Ascending aorta (tissue), 2 donors: ENCODE measurements at regions of chr22 and their contacts with region 1.

Region 1: DNA sequence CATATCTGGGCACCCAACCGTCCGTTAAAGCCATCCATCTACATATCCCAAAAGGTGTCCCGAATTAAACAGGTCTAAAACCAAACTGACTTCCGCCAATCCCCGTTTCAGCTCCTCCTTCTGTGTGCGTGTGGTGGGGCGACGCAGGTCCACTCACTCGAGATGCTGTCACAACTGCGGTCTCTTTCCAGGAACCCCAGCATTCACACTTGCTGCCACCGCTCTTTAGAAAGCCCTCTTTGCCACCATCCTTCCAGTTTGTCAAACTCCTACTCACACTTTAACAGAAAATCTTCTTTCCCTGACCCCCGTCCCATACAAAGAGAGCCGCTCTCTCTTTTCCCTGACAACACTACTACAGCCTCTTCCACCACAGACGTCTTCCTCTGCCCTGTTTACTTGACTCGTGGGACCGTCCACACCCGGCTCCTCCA is 467 bp downstream of the ESS2 start:
- DNase-seq: no peak
- H3K4me3 ChIP-seq: peak overlapping the region; percentile 78 to 80
- H3K27ac ChIP-seq: peak overlapping the region; percentile 63 to 72
- H3K4me1 ChIP-seq: peaks cover 0 to 9% of the 10 kb centered on the region in 2 donors
- H3K27me3 ChIP-seq: peaks cover 5% of the 10 kb centered on the region
- CTCF ChIP-seq: no peak

Region 2: GRCh38 chr22:19122143-19122751 is 21.7 kb before region 1 on chr22 and contains the start of gene DGCR2:
- intact Hi-C with region 1: loop called (anchors 1 kb)
- DNase-seq: peak; percentile 87 to 98
- H3K4me3 ChIP-seq: peak within 1 kb of the TSS; percentile 86 to 97
- H3K27ac ChIP-seq: peak within 1 kb of the TSS; percentile 83 to 87
- H3K4me1 ChIP-seq: peaks cover 16 to 27% of the 10 kb centered on the region in 2 donors
- H3K27me3 ChIP-seq: no peaks in the 10 kb centered on the region
- CTCF ChIP-seq: no peak
- total RNA-seq, gene DGCR2: 34.7 TPM

Region 3: GRCh38 chr22:19167106-19167869 is 23.3 kb after region 1 on chr22:
- intact Hi-C with region 1: no loop called
- DNase-seq: no peak
- H3K4me3 ChIP-seq: no peak overlapping the region
- H3K27ac ChIP-seq: no peak overlapping the region
- H3K4me1 ChIP-seq: peaks cover 9 to 19% of the 10 kb centered on the region in 2 donors
- H3K27me3 ChIP-seq: no peaks in the 10 kb centered on the region
- CTCF ChIP-seq: no peak

Region 4: GRCh38 chr22:19479357-19480172 is 335.6 kb after region 1 on chr22 and contains the start of gene CDC45:
- intact Hi-C with region 1: loop called (anchors 1 kb)
- DNase-seq: peak; percentile 90 to 98
- H3K4me3 ChIP-seq: peak within 1 kb of the TSS; percentile 84 to 85
- H3K27ac ChIP-seq: peak within 1 kb of the TSS; percentile 87 to 98
- H3K4me1 ChIP-seq: peaks cover 3 to 11% of the 10 kb centered on the region in 2 donors
- H3K27me3 ChIP-seq: no peaks in the 10 kb centered on the region
- CTCF ChIP-seq: no peak
- total RNA-seq, gene CDC45: not detected

Region 5: GRCh38 chr22:19629720-19630419 is 485.9 kb after region 1 on chr22:
- intact Hi-C with region 1: loop called (anchors 2 kb)
- DNase-seq: peak in 1 of 2 donors; percentile 80
- H3K4me3 ChIP-seq: no peak overlapping the region
- H3K27ac ChIP-seq: no peak overlapping the region
- H3K4me1 ChIP-seq: no peaks in the 10 kb centered on the region
- H3K27me3 ChIP-seq: no peaks in the 10 kb centered on the region
- CTCF ChIP-seq: peak; percentile 73 to 88 (median 82)